ENCODE measurements at regions of chr11 and their contacts with region 1.

Region 1: GRCh38 chr11:67353317-67354074 is at the start of gene POLD4:
- DNase-seq: peak; percentile 96 to 100
- H3K4me3 ChIP-seq: peak within 1 kb of the TSS; percentile 68 to 80
- H3K27ac ChIP-seq: peak within 1 kb of the TSS; percentile 98 to 99
- H3K4me1 ChIP-seq: peaks cover 26 to 60% of the 10 kb centered on the region in 2 donors
- H3K27me3 ChIP-seq: no peaks in the 10 kb centered on the region
- CTCF ChIP-seq: no peak
- total RNA-seq, gene POLD4: 107 TPM

Region 2: GRCh38 chr11:67373925-67374618 is 20.6 kb after region 1 on chr11:
- intact Hi-C with region 1: loop called (anchors 1 kb)
- DNase-seq: peak; percentile 74 to 97
- H3K4me3 ChIP-seq: peak overlapping the region; percentile 97
- H3K27ac ChIP-seq: peak overlapping the region; percentile 97 to 98
- H3K4me1 ChIP-seq: peaks cover 0 to 34% of the 10 kb centered on the region in 2 donors
- H3K27me3 ChIP-seq: no peaks in the 10 kb centered on the region
- CTCF ChIP-seq: peak; percentile 30 to 61 (median 55)

Region 3: GRCh38 chr11:67382276-67383136 is 29.0 kb after region 1 on chr11:
- intact Hi-C with region 1: loop called (anchors 1 kb)
- DNase-seq: peak in 1 of 2 donors; percentile 90
- H3K4me3 ChIP-seq: no peak overlapping the region
- H3K27ac ChIP-seq: no peak overlapping the region
- H3K4me1 ChIP-seq: peaks cover 0 to 12% of the 10 kb centered on the region in 2 donors
- H3K27me3 ChIP-seq: no peaks in the 10 kb centered on the region
- CTCF ChIP-seq: peak; percentile 96 to 99 (median 97)

Region 4: DNA sequence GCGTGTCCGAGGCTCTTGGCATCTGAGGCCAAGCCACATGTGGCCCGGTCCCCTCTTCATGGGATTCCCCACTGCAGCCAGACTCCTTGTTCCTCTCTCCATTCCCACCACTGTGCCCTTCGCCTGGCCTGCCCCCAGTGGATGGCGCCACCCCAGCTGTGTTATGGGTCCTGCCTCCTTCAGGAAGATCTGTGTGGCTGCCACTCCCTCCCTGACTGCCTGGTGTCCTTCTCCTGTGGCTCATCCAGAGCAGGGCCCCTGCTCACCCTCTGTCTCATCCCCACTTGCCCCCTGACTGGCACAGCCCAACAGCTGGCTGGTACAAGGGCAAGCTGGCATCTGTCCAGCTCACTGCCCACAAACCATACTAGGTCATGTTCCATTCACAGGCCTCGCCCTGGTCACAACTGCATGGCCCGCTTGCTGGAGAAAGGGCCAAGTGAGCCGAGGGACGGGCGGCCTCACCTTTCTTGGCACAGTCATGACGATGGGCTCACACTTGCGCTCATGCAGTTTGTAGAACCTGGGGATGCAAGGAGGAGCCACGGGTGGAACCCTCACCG is 85.9 kb after region 1 on chr11:
- intact Hi-C with region 1: no loop called
- DNase-seq: no peak
- H3K4me3 ChIP-seq: no peak overlapping the region
- H3K27ac ChIP-seq: peak overlapping the region; percentile 52 to 53
- H3K4me1 ChIP-seq: peaks cover 5 to 9% of the 10 kb centered on the region in 2 donors
- H3K27me3 ChIP-seq: no peaks in the 10 kb centered on the region
- CTCF ChIP-seq: no peak